H1 (cell line): ENCODE measurements at regions of chr2 and their contacts with region 1.

Region 1: GRCh38 chr2:121682396-121683298 is 33.4 kb upstream of the CLASP1 start:
- DNase-seq: peak in 1 of 2 experiments; percentile 68
- H3K4me3 ChIP-seq: peak overlapping the region; percentile 76 to 90 (median 86)
- H3K27ac ChIP-seq: peak overlapping the region; percentile 93
- H3K4me1 ChIP-seq: peaks cover 8 to 26% (median 18%) of the 10 kb centered on the region in 4 experiments
- H3K27me3 ChIP-seq: no peaks in the 10 kb centered on the region; a peak in 1 of 7 replicates
- CTCF ChIP-seq: no peak
- EP300 ChIP-seq: peak in 1 of 2 experiments; percentile 99; a peak in 2 of 3 replicates
- POLR2A ChIP-seq: peak; percentile 83 to 89
- RAD21 ChIP-seq: no peak

Region 2: DNA sequence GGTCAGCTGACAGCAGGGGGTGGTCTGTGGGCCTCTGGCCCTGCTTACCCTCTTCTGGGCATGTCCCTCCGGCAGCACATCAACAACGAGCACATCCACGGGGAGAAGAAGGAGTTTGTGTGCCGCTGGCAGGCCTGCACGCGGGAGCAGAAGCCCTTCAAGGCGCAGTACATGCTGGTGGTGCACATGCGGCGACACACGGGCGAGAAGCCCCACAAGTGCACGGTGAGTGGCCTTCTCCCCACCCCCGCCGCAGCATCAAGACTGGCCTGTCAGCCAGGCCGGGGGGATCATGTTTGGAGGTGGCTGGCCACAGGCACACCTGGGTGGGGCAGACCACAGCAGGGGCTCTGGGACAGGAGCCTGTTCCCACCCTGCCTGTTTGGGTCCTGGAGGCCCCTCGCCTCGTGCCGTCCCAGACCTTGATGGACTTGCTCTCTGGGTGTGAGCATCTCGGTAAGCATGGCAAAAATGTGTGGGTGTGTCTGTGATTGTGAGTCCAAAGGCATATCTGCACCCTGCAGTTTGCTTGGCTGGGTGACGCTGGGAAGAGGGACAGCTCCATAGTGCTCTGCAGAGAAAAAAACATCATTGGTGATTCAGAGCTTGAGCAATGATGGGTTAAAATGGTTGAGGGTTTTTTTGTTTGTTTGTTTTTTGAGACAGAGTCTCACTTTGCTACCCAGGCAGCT is 704.1 kb before region 1 on chr2:
- CTCF ChIA-PET with region 1: no interaction called
- POLR2A ChIA-PET with region 1: no interaction called
- DNase-seq: no peak
- H3K4me3 ChIP-seq: no peak overlapping the region
- H3K27ac ChIP-seq: no peak overlapping the region
- H3K4me1 ChIP-seq: 0 out of 7 replicates have a peak, but pooled peaks cover 0 to 2% (median 0%) of the 10 kb centered on the region in 4 experiments
- H3K27me3 ChIP-seq: no peaks in the 10 kb centered on the region
- CTCF ChIP-seq: no peak
- EP300 ChIP-seq: no peak
- POLR2A ChIP-seq: no peak
- RAD21 ChIP-seq: no peak

Region 3: GRCh38 chr2:121665504-121665903 is 17.1 kb before region 1 on chr2:
- CTCF ChIA-PET with region 1: interaction called, 6 read pairs
- POLR2A ChIA-PET with region 1: interaction called, 25 read pairs
- DNase-seq: no peak
- H3K4me3 ChIP-seq: no peak overlapping the region
- H3K27ac ChIP-seq: no peak overlapping the region
- H3K4me1 ChIP-seq: peaks cover 0 to 4% (median under 1%) of the 10 kb centered on the region in 4 experiments; a peak in 4 of 7 replicates
- H3K27me3 ChIP-seq: no peaks in the 10 kb centered on the region; a peak in 1 of 7 replicates
- CTCF ChIP-seq: no peak
- EP300 ChIP-seq: no peak
- POLR2A ChIP-seq: no peak
- RAD21 ChIP-seq: no peak

Region 4: DNA sequence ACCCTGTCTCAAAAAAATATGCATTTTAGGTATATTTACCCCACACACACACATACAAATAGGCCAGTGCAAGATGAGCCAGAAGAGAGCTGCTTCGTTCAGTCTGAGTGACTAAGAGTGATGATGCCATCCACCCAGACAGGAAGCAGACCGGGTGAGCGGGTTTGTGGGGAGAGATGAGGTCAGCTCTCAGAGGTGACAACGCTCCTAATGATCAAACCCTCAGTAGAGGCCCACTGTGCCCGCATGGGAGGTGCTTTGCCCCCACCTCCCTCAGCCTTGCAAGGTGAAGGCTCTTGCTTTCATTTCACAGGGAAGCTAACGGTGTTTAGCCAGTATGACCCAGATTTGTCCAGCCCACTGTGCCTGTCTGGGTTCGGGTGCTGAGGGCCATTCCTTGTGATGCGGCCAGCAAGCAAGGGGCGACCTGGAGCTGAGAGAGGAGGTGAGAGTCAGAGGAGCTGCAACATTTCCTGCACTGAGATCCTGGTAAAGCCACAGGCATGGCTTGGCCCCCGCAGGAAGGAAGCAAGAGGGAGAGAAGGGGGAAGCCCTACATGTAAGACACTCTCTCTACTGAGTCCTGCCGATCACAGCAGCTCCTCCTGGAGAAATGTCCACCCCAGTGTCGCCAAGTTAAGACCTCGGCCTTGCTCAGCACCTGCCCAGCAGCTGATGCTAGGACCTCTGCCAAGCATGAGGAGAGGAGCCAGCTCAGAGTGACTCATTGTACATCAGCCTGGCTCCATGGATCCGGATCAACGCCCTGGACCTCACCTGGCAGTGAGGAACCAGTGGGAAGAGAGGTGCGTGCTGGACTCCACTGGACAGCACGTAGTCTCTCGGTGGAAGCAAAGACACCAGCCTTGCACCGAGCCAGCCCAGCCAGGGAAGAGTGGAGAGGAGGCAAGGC is 17.0 kb after region 1 on chr2:
- CTCF ChIA-PET with region 1: interaction called, 7 read pairs
- POLR2A ChIA-PET with region 1: interaction called, 24 read pairs
- DNase-seq: no peak
- H3K4me3 ChIP-seq: no peak overlapping the region
- H3K27ac ChIP-seq: no peak overlapping the region
- H3K4me1 ChIP-seq: peaks cover 0 to 10% (median 6%) of the 10 kb centered on the region in 4 experiments; a peak in 3 of 7 replicates
- H3K27me3 ChIP-seq: no peaks in the 10 kb centered on the region
- CTCF ChIP-seq: no peak
- EP300 ChIP-seq: no peak
- POLR2A ChIP-seq: no peak
- RAD21 ChIP-seq: no peak

Region 5: DNA sequence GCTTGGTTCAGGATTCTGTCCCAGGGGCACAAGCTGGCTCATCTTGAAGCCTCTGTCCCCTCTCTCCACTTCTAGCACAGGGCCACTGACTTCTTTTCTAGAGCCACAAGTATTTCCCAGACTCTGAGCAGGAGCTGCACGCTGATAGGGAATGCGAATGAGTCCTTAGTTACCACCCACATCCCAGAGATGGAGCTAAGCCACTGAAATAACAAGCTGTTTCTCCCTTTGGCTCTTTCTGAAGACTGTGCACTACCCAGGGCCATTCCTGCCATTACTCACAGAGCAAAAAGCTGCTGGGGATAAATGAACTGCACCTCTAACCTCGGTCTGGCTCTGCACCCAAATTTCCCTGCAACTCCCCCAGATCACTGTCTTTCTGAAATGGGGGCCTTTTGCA is 143.4 kb after region 1 on chr2:
- CTCF ChIA-PET with region 1: no interaction called
- POLR2A ChIA-PET with region 1: no interaction called
- DNase-seq: no peak
- H3K4me3 ChIP-seq: no peak overlapping the region
- H3K27ac ChIP-seq: no peak overlapping the region
- H3K4me1 ChIP-seq: peaks cover 0 to 7% (median 3%) of the 10 kb centered on the region in 4 experiments; a peak in 4 of 7 replicates
- H3K27me3 ChIP-seq: no peaks in the 10 kb centered on the region
- CTCF ChIP-seq: no peak
- EP300 ChIP-seq: no peak
- POLR2A ChIP-seq: no peak
- RAD21 ChIP-seq: no peak